GM23248 (cell line): ENCODE measurements at regions of chr3 and their contacts with region 1.

Region 1: GRCh38 chr3:56702490-56703315 is 19.6 kb upstream of the TASOR start:
- DNase-seq: peak; percentile 82
- H3K4me3 ChIP-seq: no peak overlapping the region
- H3K27ac ChIP-seq: no peak overlapping the region
- H3K4me1 ChIP-seq: no peaks in the 10 kb centered on the region
- H3K27me3 ChIP-seq: no peaks in the 10 kb centered on the region

Region 2: DNA sequence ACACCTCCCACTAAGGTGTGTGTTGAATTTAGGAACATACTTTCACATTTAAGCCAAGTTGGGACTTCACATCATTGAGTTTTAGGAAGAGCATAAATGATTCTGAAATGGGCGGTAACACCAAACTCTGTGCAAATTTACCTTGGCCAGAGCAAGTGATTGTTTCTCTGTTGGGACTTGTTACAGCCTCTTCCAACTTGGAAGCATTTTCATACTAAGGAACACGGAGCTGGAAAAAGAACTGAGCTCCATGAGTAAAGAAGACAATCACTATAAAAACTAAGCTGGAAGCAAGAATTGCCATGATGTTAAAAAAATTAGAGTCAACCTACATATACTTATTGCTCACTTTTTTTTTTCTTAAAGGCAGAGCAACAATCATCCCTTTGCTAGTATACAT is 605.7 kb before region 1 on chr3:
- in situ Hi-C with region 1: no loop called
- DNase-seq: no peak
- H3K4me3 ChIP-seq: no peak overlapping the region
- H3K27ac ChIP-seq: no peak overlapping the region
- H3K4me1 ChIP-seq: no peaks in the 10 kb centered on the region
- H3K27me3 ChIP-seq: no peaks in the 10 kb centered on the region

Region 3: DNA sequence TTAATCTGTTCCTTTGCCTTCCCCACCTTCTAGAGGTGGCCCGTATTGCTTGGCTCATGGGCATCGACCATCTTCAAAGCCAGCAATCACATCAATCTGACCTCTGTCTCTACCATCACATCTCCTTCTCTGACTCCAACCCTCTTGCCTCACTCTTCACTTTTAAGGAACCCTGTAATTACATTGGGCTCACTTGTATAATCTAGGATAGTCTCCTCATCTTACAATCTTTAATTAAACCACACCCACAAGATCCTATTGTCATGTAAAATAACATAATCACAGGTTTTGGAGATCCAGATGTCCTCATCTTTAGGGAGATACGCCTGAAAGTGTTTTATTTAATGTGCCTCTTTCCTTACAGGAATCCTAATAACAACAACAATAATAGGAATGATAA is 469.0 kb before region 1 on chr3:
- in situ Hi-C with region 1: no loop called
- DNase-seq: no peak
- H3K4me3 ChIP-seq: no peak overlapping the region
- H3K27ac ChIP-seq: no peak overlapping the region
- H3K4me1 ChIP-seq: no peaks in the 10 kb centered on the region
- H3K27me3 ChIP-seq: no peaks in the 10 kb centered on the region; the same call in 1 of the 2 replicates

Region 4: DNA sequence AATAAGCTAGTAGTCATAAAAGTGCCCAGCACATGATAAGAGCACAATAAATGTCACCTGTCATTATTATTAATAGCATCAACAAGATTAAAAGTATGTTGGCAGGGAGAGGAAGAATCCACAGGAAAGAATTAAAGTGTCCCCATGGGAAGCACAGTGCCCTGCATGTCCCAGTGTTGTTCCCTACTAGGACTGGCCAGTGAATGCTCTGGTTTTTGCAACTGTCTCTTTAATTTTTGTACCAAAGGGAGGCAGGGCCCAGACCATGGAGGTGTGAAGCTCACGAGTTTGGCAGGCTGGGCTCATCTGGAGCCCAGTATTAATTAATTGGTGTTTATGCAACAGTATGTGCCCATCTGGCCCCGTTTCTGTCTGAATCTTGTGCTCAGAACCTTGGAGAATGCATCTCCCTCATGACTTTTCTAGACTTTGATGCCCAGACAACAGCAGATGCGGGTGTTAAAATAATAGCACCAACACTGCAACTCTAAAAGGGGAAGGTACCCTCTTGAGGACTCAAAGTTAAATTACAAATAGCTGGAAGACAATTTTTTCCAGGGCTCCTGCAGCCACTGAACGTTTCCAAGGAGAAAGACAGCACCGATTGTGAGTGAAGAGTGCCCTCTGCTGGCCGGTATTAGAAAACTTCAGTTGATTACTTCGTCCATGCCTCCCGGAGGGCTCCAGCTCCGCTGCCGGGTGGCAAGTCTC is 285.9 kb after region 1 on chr3:
- in situ Hi-C with region 1: loop called (anchors 5 kb)
- DNase-seq: peak; percentile 84
- H3K4me3 ChIP-seq: no peak overlapping the region
- H3K27ac ChIP-seq: no peak overlapping the region
- H3K4me1 ChIP-seq: peaks cover 11% of the 10 kb centered on the region
- H3K27me3 ChIP-seq: no peaks in the 10 kb centered on the region